Kidney (tissue), 22 donors: ENCODE measurements at regions of chr17 and their contacts with region 1.

Region 1: DNA sequence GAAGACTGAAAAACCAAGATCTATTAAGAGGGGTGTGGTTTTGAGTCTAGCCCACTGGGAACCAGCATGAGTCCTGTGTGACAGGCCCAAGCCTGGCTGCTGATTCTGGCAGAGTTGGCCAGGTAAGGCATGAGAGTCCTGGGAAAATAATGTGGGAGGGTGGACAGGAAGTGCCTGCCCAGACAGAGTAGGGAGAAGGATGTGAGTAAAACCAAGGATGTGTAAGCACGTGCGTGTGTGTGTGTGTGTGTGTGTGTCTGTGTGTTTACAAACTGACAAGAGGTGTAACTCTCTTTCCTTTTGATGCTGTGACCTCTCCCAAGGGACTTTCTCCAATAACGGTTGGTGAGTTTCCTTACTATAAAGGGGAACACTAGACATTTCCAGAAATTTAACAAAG is 15.6 kb upstream of the TEX2 start:
- DNase-seq: no peak
- H3K4me3 ChIP-seq: no peak overlapping the region
- H3K27ac ChIP-seq: no peak overlapping the region
- H3K4me1 ChIP-seq: peaks cover 0 to 2% (median 0%) of the 10 kb centered on the region in 3 donors
- H3K27me3 ChIP-seq: no peaks in the 10 kb centered on the region
- CTCF ChIP-seq: no peak

Region 2: GRCh38 chr17:63919311-63919723 is 359.3 kb before region 1 on chr17:
- intact Hi-C with region 1: no loop called
- DNase-seq: peak in 4 of 5 donors; percentile 47 to 67 (median 56)
- H3K4me3 ChIP-seq: no peak overlapping the region
- H3K27ac ChIP-seq: no peak overlapping the region
- H3K4me1 ChIP-seq: no peaks in the 10 kb centered on the region
- H3K27me3 ChIP-seq: no peaks in the 10 kb centered on the region
- CTCF ChIP-seq: peak; percentile 93

Region 3: GRCh38 chr17:64129764-64130558 is 148.7 kb before region 1 on chr17 and contains the start of gene ERN1:
- intact Hi-C with region 1: no loop called
- DNase-seq: peak; percentile 94 to 99 (median 96)
- H3K4me3 ChIP-seq: peak within 1 kb of the TSS; percentile 71 to 86 (median 76)
- H3K27ac ChIP-seq: peak within 1 kb of the TSS; percentile 91 to 92
- H3K4me1 ChIP-seq: peaks cover 0 to 9% (median 0%) of the 10 kb centered on the region in 3 donors
- H3K27me3 ChIP-seq: no peaks in the 10 kb centered on the region
- CTCF ChIP-seq: no peak
- total RNA-seq, gene ERN1: 37.0 TPM

Region 4: GRCh38 chr17:64155751-64156544 is 122.7 kb before region 1 on chr17:
- intact Hi-C with region 1: loop called (anchors 10 kb)
- DNase-seq: peak; percentile 77 to 91 (median 81)
- H3K4me3 ChIP-seq: no peak overlapping the region
- H3K27ac ChIP-seq: peak overlapping the region; percentile 71 to 73
- H3K4me1 ChIP-seq: peaks cover 3 to 37% (median 27%) of the 10 kb centered on the region in 3 donors
- H3K27me3 ChIP-seq: no peaks in the 10 kb centered on the region
- CTCF ChIP-seq: no peak